T-cell (primary cell): ENCODE measurements at regions of chr2 and their contacts with region 1.

Region 1: DNA sequence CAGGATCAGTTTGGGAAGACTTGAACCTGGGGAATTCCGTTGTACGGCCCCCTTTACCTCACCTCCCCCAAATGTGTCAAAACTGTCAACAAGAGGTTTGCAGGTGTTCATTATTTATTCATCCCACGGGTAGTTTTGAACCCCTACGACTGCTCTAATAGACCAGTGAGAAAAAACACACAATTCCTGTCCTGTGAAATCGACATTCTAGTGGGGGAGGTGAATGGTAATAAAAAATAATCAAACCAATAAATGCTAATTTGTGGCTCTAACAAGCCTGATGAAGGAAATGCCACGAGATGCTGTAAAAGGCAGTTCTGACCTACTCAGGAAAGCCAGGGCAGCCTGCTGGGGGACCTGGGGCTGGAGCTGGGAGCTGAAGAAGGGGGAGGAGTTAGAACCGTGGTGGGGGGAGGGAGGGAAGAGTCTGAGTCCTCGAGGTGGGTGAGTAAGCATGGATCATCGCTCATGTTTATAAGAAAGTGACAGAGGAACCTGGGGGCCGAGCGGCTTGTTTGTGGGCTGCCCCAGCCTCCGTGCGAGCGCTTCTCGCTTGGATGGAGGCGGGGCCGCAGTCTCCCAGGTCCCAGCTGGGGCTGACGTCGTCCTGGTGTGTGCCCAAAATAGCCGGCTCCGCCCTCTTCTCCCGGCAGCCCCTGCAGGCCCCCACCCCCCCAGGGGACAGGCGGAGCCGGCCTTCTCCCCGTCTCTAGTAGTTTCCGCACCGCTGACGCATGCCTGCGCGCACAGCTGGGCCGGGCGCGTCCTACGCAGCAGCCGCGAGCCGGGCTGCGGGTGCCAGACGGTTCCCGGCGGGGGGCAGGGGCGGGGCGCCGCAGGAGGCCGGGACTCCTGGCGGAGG is at the start of gene DNAJB2:
- DNase-seq: peak; percentile 91 to 100 (median 99)
- ATAC-seq: peak; percentile 82 to 93 (median 92)
- H3K4me3 ChIP-seq: peak within 1 kb of the TSS; percentile 76 to 93
- H3K4me3 Mint-ChIP-seq: peak within 1 kb of the TSS; percentile 85 to 98 (median 97)
- H3K27ac ChIP-seq: peak within 1 kb of the TSS; percentile 100
- H3K27ac Mint-ChIP-seq: peak within 1 kb of the TSS; percentile 99
- H3K4me1 ChIP-seq: peaks cover 11 to 42% of the 10 kb centered on the region in 2 experiments
- H3K4me1 Mint-ChIP-seq: peaks cover 43 to 54% (median 49%) of the 10 kb centered on the region in 3 donors
- H3K27me3 ChIP-seq: no peaks in the 10 kb centered on the region
- H3K27me3 Mint-ChIP-seq: no peaks in the 10 kb centered on the region
- total RNA-seq, gene DNAJB2: 83.0 to 150 (median 91.8) TPM

Region 2: DNA sequence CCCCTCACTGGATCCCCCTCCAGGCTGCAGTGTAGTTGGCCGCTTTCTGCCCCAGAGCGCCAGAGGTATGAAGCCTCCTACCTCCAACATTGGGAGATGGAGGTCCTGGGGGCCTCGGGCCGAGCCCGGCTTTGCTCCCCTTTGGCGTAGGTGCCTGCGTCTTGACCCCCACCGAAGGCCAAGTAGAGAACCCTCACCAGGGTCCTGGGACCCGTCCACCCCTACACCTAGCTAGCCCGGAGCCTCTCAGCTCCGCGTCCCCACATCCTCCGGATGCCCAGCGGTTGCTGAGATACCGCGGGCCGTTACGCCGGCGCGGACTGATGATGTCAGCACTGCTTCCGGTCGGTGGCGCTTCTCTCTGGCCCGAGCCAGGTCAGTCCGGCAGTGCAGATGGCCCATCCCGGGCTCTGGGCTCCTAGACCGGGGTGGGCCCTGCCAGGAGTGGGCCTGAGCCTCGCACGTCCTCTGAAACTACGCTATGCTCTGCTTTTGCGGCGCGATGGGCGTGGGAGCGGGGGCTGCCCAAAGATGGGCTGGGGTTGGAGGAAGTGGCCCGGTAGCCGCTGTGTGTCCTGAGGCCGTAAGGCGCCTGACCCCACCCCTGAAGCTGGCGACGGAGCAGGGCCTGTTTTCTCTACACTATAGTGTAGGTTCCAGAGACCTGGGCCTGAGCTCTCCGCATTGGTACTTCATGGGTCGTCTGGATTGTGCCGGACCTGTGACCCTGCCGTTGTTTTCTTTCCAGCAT is 33.6 kb before region 1 on chr2 and contains the starts of genes GLB1L and STK16:
- CTCF ChIA-PET with region 1: interaction called in 1 of 2 experiments, 4 read pairs
- POLR2A ChIA-PET with region 1: interaction called, 4 to 14 read pairs
- DNase-seq: peak; percentile 63 to 93 (median 81)
- ATAC-seq: peak; percentile 56 to 70 (median 66)
- H3K4me3 ChIP-seq: peak within 1 kb of the TSS; percentile 89 to 90
- H3K4me3 Mint-ChIP-seq: peak within 1 kb of the TSS; percentile 75 to 92 (median 87)
- H3K27ac ChIP-seq: peak within 1 kb of the TSS; percentile 94
- H3K27ac Mint-ChIP-seq: peak within 1 kb of the TSS; percentile 98 to 99
- H3K4me1 ChIP-seq: peaks cover 42 to 62% of the 10 kb centered on the region in 2 experiments
- H3K4me1 Mint-ChIP-seq: peaks cover 56 to 66% (median 59%) of the 10 kb centered on the region in 3 donors
- H3K27me3 ChIP-seq: no peaks in the 10 kb centered on the region
- H3K27me3 Mint-ChIP-seq: no peaks in the 10 kb centered on the region
- total RNA-seq, gene GLB1L: 1.1 to 3.0 (median 1.8) TPM
- total RNA-seq, gene STK16: 19.3 to 26.6 (median 21.3) TPM

Region 3: DNA sequence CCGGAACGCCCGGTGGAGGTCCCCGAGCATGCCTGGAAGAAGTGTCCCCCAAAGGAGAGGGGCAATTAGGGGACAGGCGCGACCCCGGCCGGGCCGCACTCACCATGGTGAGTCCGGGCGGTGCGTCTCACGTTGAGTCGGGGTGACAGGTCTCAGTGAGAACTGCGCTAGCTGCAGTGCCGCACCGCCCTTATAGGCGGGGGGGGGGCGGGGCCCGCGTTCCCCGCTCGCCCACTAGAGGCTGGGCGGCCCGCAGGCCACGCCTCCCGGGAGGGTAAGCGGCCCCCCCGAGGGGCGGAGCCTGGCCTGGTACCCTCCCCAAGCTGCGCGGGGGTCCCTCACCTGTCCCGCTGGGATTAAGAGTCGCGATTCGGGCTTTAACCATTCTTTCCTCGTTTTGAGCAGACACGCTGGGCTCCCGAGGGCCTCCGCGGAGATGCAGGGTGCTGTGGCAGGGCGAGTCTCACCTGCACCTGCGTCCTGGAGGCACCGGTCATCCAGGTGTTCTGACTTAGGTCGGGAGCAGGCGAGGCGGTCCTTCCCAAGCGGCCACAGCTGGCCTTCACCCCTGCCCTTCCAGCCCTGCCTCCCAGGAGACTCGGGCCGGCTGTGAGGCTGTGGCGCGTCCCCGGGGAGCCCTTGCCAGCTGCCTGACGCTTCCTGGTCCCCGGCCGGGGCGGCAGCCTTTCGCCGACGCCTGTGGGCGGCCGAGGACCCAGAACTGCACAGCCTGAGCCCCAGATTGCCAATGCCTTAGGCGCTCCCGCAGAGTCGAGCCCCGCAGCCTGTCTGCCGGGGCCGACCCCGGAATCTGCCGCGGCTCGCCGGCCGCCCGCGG is 24.9 kb before region 1 on chr2 and contains the start of gene TUBA4A:
- CTCF ChIA-PET with region 1: interaction called, 6 to 38 read pairs
- POLR2A ChIA-PET with region 1: interaction called, 14 read pairs
- DNase-seq: peak; percentile 82 to 96 (median 89)
- ATAC-seq: peak; percentile 77 to 87 (median 78)
- H3K4me3 ChIP-seq: peak within 1 kb of the TSS; percentile 95 to 99
- H3K4me3 Mint-ChIP-seq: peak within 1 kb of the TSS; percentile 75 to 96 (median 83)
- H3K27ac ChIP-seq: peak within 1 kb of the TSS; percentile 94
- H3K27ac Mint-ChIP-seq: peak within 1 kb of the TSS; percentile 98 to 99
- H3K4me1 ChIP-seq: peaks cover 25 to 47% of the 10 kb centered on the region in 2 experiments
- H3K4me1 Mint-ChIP-seq: peaks cover 47 to 48% (median 48%) of the 10 kb centered on the region in 3 donors
- H3K27me3 ChIP-seq: no peaks in the 10 kb centered on the region
- H3K27me3 Mint-ChIP-seq: no peaks in the 10 kb centered on the region
- total RNA-seq, gene TUBA4A: 108 to 196 (median 121) TPM

Region 4: DNA sequence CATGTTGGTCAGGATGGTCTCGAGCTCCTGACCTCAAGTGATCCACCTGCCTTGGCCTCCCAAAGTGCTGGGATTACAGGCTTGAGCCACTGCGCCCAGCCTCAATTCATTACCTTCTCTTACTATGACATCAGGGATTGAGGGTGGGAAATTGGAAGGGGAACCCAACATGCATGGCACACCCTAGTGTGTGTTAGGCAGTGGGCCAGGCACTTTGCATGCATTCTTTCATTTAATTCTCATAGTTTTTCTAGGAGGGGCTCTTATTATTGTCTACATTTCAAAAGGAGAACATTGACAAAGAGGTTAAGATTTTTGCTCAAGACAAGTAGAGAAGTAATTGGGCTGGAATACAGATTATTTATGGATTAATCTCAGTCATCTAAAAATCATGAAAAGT is 10.6 kb before region 1 on chr2:
- CTCF ChIA-PET with region 1: interaction called in 1 of 2 experiments, 13 read pairs
- POLR2A ChIA-PET with region 1: interaction called in 1 of 2 experiments, 7 read pairs
- DNase-seq: no peak
- ATAC-seq: no peak
- H3K4me3 ChIP-seq: no peak overlapping the region
- H3K4me3 Mint-ChIP-seq: no peak overlapping the region
- H3K27ac ChIP-seq: no peak overlapping the region
- H3K27ac Mint-ChIP-seq: no peak overlapping the region
- H3K4me1 ChIP-seq: no peaks in the 10 kb centered on the region
- H3K4me1 Mint-ChIP-seq: no peaks in the 10 kb centered on the region
- H3K27me3 ChIP-seq: peaks cover 0 to 16% of the 10 kb centered on the region in 2 experiments
- H3K27me3 Mint-ChIP-seq: no peaks in the 10 kb centered on the region

Region 5: GRCh38 chr2:219509780-219510511 is 231.1 kb after region 1 on chr2:
- CTCF ChIA-PET with region 1: no interaction called
- POLR2A ChIA-PET with region 1: no interaction called
- DNase-seq: peak in 32 of 35 experiments; percentile 14 to 70 (median 46)
- ATAC-seq: peak; percentile 77 to 92 (median 80)
- H3K4me3 ChIP-seq: peak overlapping the region in 1 of 2 donors; percentile 23
- H3K4me3 Mint-ChIP-seq: peak overlapping the region; percentile 31 to 77 (median 47)
- H3K27ac ChIP-seq: no peak overlapping the region
- H3K27ac Mint-ChIP-seq: peak overlapping the region in 1 of 2 donors; percentile 12
- H3K4me1 ChIP-seq: peaks cover 3 to 27% of the 10 kb centered on the region in 2 experiments
- H3K4me1 Mint-ChIP-seq: peaks cover 26 to 32% (median 27%) of the 10 kb centered on the region in 3 donors
- H3K27me3 ChIP-seq: peaks cover 8 to 83% of the 10 kb centered on the region in 2 experiments
- H3K27me3 Mint-ChIP-seq: peaks cover 46 to 56% of the 10 kb centered on the region in 2 donors